WTC11 (cell line): ENCODE measurements at regions of chr13 and their contacts with region 1.

Region 1: DNA sequence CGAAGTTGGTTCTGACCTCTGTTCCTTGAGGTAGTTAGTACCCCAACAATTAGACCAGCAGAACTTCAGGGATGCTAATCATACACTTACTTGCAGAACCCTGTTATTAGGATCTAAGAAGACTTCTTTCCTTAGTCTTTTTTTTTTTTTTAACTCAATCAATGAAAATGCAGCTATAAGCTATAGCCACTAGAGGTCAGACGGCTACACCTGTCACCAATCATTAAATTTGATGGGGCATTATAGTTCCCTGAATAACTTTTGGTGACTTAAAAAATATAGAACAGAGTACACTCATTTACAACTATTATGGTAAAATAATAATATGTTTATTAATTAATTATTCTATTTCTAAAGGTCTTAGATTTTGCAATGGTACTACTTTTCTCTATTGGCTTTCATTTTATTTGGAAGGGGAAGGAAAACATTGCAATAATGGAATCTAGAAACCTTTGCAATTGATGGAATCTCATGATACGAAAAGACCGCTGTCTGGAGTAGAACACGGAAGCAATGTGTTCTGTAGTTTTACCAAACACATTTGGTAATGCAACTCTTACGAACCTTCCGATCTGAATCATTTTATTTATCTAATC is 483.2 kb downstream of the DIAPH3 start:
- DNase-seq: no peak
- ATAC-seq: no peak
- H3K4me3 Mint-ChIP-seq: no peak overlapping the region
- H3K27ac Mint-ChIP-seq: no peak overlapping the region
- H3K4me1 Mint-ChIP-seq: peaks cover 18% of the 10 kb centered on the region
- H3K27me3 Mint-ChIP-seq: no peaks in the 10 kb centered on the region
- CTCF ChIP-seq: peak; percentile 58

Region 2: GRCh38 chr13:59696271-59696670 is 15.7 kb after region 1 on chr13:
- CTCF ChIA-PET with region 1: no interaction called
- POLR2A ChIA-PET with region 1: no interaction called
- DNase-seq: no peak
- ATAC-seq: no peak
- H3K4me3 Mint-ChIP-seq: no peak overlapping the region
- H3K27ac Mint-ChIP-seq: no peak overlapping the region
- H3K4me1 Mint-ChIP-seq: peaks cover 8% of the 10 kb centered on the region
- H3K27me3 Mint-ChIP-seq: no peaks in the 10 kb centered on the region
- CTCF ChIP-seq: no peak

Region 3: GRCh38 chr13:59771272-59771671 is 90.7 kb after region 1 on chr13:
- CTCF ChIA-PET with region 1: interaction called, 12 read pairs
- POLR2A ChIA-PET with region 1: no interaction called
- DNase-seq: no peak
- ATAC-seq: 0 out of 2 replicates have a peak, but pooled peaks have one; percentile 38
- H3K4me3 Mint-ChIP-seq: no peak overlapping the region
- H3K27ac Mint-ChIP-seq: no peak overlapping the region
- H3K4me1 Mint-ChIP-seq: peaks cover 25% of the 10 kb centered on the region
- H3K27me3 Mint-ChIP-seq: no peaks in the 10 kb centered on the region
- CTCF ChIP-seq: no peak

Region 4: GRCh38 chr13:59834801-59835200 is 154.3 kb after region 1 on chr13:
- CTCF ChIA-PET with region 1: no interaction called
- POLR2A ChIA-PET with region 1: no interaction called
- DNase-seq: no peak
- ATAC-seq: no peak
- H3K4me3 Mint-ChIP-seq: no peak overlapping the region
- H3K27ac Mint-ChIP-seq: 0 out of 2 replicates have a peak overlapping the region, but pooled peaks have one; percentile 6
- H3K4me1 Mint-ChIP-seq: peaks cover 15% of the 10 kb centered on the region
- H3K27me3 Mint-ChIP-seq: no peaks in the 10 kb centered on the region
- CTCF ChIP-seq: no peak